ENCODE measurements at regions of chr13 and their contacts with region 1.

Region 1: DNA sequence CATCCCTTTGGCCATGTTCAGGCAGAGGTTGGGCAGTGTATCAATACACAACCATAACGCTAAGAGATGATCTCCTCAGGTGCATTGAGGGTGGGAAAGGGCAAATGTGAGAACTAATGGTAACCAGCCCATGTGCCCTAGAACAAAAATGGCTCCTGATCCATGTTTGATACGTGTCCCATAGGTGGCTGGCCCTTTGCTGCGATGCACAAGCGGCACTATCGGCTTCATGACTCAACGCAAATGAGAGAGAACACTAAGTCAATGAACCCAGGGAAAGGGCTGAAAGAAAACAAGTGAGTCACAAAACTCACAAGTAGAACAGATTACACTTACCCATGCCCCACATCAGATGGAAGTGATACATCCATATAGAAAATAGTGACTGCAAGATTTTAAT is 201.7 kb downstream of the ABCC4 start:
- DNase-seq: peak; percentile 72
- H3K4me3 ChIP-seq: no peak overlapping the region
- H3K27ac ChIP-seq: peak overlapping the region; percentile 78
- H3K4me1 ChIP-seq: peaks cover 24% of the 10 kb centered on the region
- H3K27me3 ChIP-seq: no peaks in the 10 kb centered on the region
- CTCF ChIP-seq: no peak
- POLR2A ChIP-seq: no peak

Region 2: DNA sequence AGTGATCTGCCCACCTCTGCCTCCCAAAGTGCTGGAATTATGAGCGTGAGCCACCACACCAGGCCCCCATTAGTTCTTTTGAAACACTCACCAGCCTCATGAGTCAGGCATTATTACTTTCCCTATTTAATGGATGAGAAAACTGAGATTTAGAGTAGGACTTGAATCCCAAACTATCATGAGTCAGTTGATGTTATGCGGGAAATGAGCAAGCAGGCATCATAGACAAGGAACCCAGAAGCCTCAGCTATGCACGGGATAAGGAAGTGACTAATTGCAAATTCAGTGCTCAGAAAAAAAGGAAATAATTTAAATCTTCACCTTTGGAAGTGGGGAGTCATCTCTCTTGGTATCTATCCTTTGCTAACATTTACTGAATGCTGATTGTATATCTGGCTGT is 15.8 kb before region 1 on chr13:
- CTCF ChIA-PET with region 1: interaction called, 3 read pairs
- POLR2A ChIA-PET with region 1: no interaction called
- dilution Hi-C with region 1: no loop called
- intact Hi-C with region 1: loop called (anchors 1 kb)
- DNase-seq: peak; percentile 86
- H3K4me3 ChIP-seq: no peak overlapping the region
- H3K27ac ChIP-seq: peak overlapping the region; percentile 44
- H3K4me1 ChIP-seq: peaks cover 30% of the 10 kb centered on the region
- H3K27me3 ChIP-seq: no peaks in the 10 kb centered on the region
- CTCF ChIP-seq: no peak
- POLR2A ChIP-seq: no peak

Region 3: DNA sequence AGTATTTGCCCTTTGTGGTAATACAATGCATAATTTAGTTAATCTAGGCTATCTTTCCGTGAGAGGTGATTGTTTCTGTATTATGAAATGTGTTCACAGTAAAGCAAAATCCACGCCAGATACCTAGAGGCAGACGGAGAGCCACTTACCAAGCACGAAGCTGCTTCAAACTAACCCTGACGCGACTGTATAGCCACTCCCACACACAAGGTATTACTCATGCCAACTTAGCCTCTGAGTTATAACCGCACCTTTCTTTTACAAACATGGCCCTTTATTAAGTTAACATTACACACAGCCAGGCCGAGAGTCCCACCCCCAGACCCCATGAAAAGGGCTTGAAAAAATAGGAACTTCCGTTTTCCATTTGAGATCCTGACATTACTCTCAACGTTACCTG is 16.0 kb after region 1 on chr13:
- CTCF ChIA-PET with region 1: interaction called, 6 read pairs
- POLR2A ChIA-PET with region 1: no interaction called
- dilution Hi-C with region 1: no loop called
- intact Hi-C with region 1: loop called (anchors 2 kb)
- DNase-seq: no peak
- H3K4me3 ChIP-seq: peak overlapping the region in 1 of 3 experiments; percentile 13
- H3K27ac ChIP-seq: peak overlapping the region; percentile 65
- H3K4me1 ChIP-seq: peaks cover 43% of the 10 kb centered on the region
- H3K27me3 ChIP-seq: no peaks in the 10 kb centered on the region
- CTCF ChIP-seq: no peak
- POLR2A ChIP-seq: no peak

Measured in endothelial cell of umbilical vein (primary cell).